ENCODE measurements at regions of chr6 and their contacts with region 1.

Region 1: GRCh38 chr6:119978274-119978889 is 628.8 kb upstream of the MAN1A1 start:
- DNase-seq: peak; percentile 39 to 51
- H3K4me3 ChIP-seq: no peak overlapping the region
- H3K27ac ChIP-seq: no peak overlapping the region
- H3K4me1 ChIP-seq: no peaks in the 10 kb centered on the region
- H3K27me3 ChIP-seq: no peaks in the 10 kb centered on the region
- CTCF ChIP-seq: peak in 5 of 6 experiments; percentile 27 to 71 (median 64)
- POLR2A ChIP-seq: no peak

Region 2: DNA sequence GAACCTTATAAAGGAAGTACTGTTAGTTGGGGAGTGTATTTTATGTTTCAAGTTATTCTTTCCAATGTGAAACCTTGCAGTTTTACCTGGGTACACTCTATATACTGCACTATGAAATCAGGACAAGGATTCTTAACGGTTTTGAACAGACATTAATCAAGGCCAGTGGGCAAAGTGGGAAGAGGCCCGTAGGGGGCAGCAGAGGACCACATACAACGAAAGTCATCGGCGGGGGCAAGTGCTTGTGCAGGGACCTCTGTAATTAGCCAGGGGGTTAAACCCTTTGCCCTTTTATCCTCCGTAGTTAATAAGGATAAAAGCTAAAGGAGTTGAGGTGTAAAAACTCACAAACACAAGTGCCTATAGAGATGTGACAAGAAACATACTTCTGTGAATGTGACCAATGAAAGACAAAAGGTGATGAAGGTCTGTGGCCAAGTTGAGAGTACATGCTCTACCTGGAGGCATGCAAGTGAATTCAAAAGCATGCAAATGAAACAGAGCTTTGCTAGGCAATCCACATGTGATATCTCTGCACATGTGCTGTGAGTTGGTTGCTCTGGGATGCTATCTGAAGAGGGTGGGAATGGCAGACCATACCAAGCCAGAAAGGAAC is 236.1 kb before region 1 on chr6:
- intact Hi-C with region 1: loop called (anchors 10 kb)
- DNase-seq: peak; percentile 65 to 66
- H3K4me3 ChIP-seq: no peak overlapping the region
- H3K27ac ChIP-seq: no peak overlapping the region
- H3K4me1 ChIP-seq: no peaks in the 10 kb centered on the region
- H3K27me3 ChIP-seq: no peaks in the 10 kb centered on the region
- CTCF ChIP-seq: peak; percentile 48 to 84 (median 80)
- POLR2A ChIP-seq: no peak

Region 3: DNA sequence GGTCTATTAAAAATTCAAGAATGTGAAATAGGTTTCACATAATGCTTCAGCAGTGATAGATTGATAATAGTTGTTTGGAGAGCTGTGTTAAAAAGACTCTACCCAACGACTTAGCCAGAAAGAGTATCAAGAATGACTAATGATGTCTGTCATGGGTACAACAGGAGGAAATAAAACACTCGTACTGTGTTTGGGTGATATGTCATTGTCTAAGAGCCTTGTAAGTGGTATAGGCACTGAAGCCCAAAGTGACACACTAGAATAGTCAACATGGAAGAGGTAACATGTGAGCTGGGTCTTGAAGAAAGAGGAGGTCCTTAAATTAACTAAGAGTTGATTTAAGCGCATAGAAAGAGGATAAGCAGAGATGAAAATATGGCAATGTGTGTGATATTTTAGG is 157.0 kb before region 1 on chr6:
- intact Hi-C with region 1: no loop called
- DNase-seq: no peak
- H3K4me3 ChIP-seq: no peak overlapping the region
- H3K27ac ChIP-seq: no peak overlapping the region
- H3K4me1 ChIP-seq: no peaks in the 10 kb centered on the region
- H3K27me3 ChIP-seq: no peaks in the 10 kb centered on the region
- CTCF ChIP-seq: no peak
- POLR2A ChIP-seq: no peak

Measured in thyroid gland (tissue), 4 donors.